AG04449 (cell line): ENCODE measurements at regions of chr1 and their contacts with region 1.

Region 1: DNA sequence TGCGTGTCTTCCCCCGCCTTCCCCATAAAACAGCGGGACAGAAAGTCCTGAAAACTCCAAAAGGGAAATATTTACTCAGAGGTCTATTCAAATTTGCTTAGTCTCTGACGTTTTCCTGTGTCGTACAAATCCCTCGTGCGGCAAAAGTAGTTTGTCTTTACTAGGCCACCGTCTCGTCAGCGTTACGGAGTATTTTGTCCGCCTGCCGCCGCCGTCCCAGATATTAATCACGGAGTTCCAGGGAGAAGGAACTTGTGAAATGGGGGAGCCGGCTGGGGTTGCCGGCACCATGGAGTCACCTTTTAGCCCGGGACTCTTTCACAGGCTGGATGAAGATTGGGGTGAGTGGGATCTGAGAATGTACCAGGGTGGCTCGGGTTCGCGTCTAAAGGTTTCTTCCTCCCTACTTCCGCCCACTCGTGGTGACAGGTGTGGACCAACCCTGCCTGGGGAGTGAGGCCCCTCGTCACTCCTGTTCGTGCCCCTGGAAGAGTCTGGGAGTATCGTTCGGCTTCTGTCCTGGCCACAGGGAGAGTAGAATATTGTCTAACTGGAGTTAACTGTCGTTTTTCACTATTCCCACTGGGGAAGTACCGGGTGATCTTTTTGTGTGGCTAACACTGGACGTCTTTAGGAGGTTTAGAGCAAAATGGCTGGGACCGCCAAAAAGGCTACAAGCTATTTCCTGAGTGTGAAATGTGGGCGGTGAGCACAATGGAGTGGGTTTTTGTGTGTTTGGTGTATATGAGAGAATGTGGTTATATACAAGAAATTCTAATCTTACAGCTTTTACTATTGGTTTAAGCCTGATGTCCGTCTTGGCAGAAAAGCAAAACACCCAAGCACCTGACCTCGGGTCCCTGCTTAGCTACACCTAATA is at the start of gene ATF6:
- DNase-seq: peak; percentile 68
- H3K4me3 ChIP-seq: peak within 1 kb of the TSS; percentile 99
- CTCF ChIP-seq: no peak

Region 2: GRCh38 chr1:161749509-161750407 is 16.6 kb before region 1 on chr1 and contains the start of gene DUSP12:
- CTCF ChIA-PET with region 1: interaction called, 11 read pairs
- POLR2A ChIA-PET with region 1: interaction called, 4 read pairs
- DNase-seq: peak; percentile 72
- H3K4me3 ChIP-seq: peak within 1 kb of the TSS; percentile 97
- CTCF ChIP-seq: peak; percentile 47

Region 3: GRCh38 chr1:162040681-162041080 is 274.3 kb after region 1 on chr1:
- CTCF ChIA-PET with region 1: interaction called, 15 read pairs
- POLR2A ChIA-PET with region 1: no interaction called
- DNase-seq: no peak
- H3K4me3 ChIP-seq: no peak overlapping the region
- CTCF ChIP-seq: peak; percentile 55